ENCODE measurements at regions of chr10 and their contacts with region 1.

Region 1: DNA sequence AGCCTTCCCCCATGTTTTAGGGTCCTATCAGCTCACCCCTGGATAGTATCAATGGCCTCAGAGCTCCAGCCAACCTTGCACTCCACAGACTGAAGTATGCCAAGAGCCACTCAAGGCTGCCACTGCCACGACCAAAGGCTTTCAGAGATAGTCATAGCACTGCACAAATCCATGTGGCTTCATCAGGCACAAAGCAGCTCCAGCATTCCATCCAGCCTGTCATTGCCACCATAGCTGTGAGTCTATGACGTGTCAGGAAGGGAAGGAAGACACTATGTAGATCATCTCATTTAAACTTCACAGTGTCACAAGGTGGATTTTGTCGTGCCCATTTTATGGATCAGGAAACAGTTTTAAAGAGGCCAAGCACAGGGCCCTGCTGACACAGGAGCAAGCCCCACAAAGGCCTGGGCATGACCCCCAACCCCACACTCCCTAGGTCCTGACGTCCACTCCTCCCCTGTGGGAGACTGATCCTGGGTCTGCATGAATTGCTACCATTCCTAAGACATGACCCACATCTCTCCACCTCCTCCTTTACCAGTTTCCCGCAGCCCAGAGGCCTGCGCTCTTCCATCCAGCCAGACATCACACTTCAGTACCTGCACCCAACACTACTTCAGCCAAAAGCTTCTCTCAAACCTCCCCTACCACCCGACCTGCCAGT is 119.4 kb downstream of the DIP2C start:
- DNase-seq: no peak
- ATAC-seq: no peak
- H3K4me3 ChIP-seq: no peak overlapping the region
- H3K27ac ChIP-seq: no peak overlapping the region
- H3K4me1 ChIP-seq: peaks cover 0 to 3% of the 10 kb centered on the region in 2 donors
- H3K27me3 ChIP-seq: no peaks in the 10 kb centered on the region

Region 2: GRCh38 chr10:484441-484924 is 85.6 kb before region 1 on chr10:
- intact Hi-C with region 1: no loop called
- DNase-seq: peak; percentile 66 to 81
- ATAC-seq: peak; percentile 81
- H3K4me3 ChIP-seq: peak overlapping the region; percentile 44 to 53
- H3K27ac ChIP-seq: peak overlapping the region in 1 of 2 donors; percentile 75
- H3K4me1 ChIP-seq: no peaks in the 10 kb centered on the region
- H3K27me3 ChIP-seq: no peaks in the 10 kb centered on the region

Region 3: DNA sequence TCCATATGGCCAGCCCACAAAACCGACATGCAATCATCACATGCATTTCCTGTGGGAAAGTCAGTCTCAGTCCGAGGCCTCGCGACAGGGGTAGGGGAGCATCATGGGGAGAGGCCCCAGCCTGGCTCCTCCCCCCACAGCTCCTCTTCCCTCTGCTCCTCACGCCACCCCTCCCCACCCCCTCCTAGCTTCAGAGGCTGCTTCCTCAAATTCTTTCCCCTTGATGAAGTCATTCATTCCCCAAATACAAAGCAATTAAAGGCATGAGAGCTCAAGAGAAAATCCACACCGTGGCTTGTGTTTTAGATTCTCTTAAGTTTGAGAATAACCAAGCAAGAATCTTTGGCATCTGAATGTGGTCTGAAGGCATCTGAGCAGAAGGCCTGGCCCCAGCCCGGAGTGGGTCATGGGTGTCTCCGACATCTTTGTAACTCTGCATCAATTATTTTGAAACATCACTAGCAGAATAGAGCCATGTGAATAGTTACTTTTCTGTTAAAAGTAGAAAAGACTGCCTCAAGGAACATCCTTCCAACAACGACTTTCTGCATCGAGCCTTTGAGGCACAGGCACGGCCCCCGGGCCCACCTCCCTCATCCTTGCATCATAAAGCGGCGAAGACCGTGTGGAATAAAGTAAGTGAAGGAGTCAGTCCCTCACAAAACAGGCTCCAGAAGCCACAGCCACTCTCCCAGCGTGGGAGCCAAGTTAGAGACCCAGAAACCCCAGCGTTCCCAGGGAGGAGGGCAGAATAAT is 28.5 kb after region 1 on chr10:
- intact Hi-C with region 1: loop called in 1 of 2 experiments (anchors 2 kb)
- DNase-seq: peak; percentile 11 to 79
- ATAC-seq: no peak
- H3K4me3 ChIP-seq: no peak overlapping the region
- H3K27ac ChIP-seq: peak overlapping the region; percentile 62 to 75
- H3K4me1 ChIP-seq: no peaks in the 10 kb centered on the region
- H3K27me3 ChIP-seq: no peaks in the 10 kb centered on the region